ENCODE measurements at regions of chr11 and their contacts with region 1.

Region 1: DNA sequence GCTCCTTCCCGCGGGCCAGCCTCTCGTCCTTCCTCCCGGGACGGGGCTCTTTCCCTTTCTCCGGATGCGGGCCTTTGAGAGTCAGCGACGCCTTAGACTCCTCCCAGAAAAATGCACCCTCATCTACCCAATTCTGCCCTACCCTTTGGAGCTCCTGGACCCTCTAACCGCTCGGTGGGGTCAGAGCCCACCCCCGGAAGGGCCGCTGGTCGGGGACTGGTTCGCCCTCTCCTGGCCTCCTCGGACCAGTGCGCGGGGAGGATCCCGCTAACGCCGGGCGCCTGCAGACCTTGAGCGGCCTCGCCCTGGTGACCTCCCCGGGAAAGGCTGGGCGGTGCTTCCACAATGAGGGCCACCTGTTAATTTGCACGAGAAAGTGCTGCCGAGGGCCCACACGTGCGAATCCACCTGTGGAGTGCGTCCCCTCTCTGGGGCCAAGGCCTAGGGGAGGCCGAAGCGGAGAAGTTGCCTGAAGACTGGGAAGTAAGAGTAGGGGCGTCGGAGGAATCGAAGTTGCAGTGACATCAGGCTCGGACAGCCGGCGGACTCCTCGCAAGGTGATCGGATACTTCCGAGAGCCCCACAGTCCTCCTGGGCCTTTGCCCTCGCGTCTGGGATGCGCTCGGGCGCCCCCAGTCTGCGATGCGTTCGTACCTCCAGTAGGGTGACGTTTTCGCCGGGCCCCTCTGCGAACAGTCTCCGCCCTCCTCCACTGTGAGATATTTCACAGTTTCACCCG is 61.5 kb downstream of the ENDOD1 start:
- DNase-seq: peak; percentile 98 to 99
- H3K4me3 ChIP-seq: peak overlapping the region; percentile 51
- H3K4me3 Mint-ChIP-seq: peak overlapping the region; percentile 93
- H3K27ac Mint-ChIP-seq: peak overlapping the region; percentile 94
- H3K4me1 ChIP-seq: peaks cover 14% of the 10 kb centered on the region
- H3K4me1 Mint-ChIP-seq: peaks cover 20% of the 10 kb centered on the region
- H3K27me3 ChIP-seq: no peaks in the 10 kb centered on the region
- H3K27me3 Mint-ChIP-seq: no peaks in the 10 kb centered on the region
- CTCF ChIP-seq: peak; percentile 96 to 97

Region 2: DNA sequence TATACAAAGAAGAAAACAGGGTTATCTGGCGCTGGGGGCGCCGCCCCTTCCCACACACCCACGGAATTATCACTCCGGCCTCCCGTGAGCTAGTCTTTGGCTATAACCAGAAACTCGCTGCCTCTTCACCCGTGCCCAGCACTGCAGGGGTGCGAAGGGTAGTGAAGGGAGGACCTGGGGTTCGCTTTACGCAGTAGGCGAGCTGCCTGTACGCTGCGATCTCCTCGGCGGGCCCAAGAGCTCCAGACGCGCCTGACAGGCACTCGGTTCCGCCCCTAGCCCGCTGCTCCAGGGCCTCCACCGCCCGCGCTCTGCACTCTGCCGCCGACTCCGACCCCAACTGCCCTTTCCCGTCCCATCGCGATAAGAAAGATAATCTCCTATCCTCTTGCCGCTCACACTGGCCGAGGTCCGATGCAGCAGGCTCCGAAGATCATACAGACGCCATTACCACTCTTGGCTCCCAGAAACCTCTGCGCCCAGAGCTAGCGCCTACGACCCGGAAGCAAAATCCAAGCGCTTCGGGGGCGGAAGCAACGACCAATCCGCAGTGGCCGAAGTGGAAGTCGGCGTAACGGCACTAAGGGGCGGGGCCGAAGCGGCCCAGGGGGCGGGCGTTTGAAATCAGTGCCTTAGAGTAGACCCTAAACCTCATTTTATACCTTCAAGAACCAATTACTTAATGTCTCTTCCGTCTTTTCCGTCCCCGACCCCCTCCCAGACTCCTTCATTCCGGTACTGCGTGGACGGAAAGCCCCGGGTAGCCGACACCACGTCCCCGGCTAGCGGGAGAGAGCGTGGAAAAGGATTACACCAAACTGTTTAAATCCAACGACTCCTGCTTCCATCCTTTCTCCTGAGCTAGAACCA is 177.8 kb before region 1 on chr11 and contains the starts of genes CWC15 and KDM4D:
- CTCF ChIA-PET with region 1: interaction called, 4 read pairs
- POLR2A ChIA-PET with region 1: interaction called, 5 read pairs
- intact Hi-C with region 1: loop called (anchors 5 kb)
- DNase-seq: peak; percentile 97
- H3K4me3 ChIP-seq: peak within 1 kb of the TSS; percentile 56
- H3K4me3 Mint-ChIP-seq: peak within 1 kb of the TSS; percentile 89
- H3K27ac Mint-ChIP-seq: peak within 1 kb of the TSS; percentile 94
- H3K4me1 ChIP-seq: peaks cover 9% of the 10 kb centered on the region; the same call in 1 of the 2 replicates
- H3K4me1 Mint-ChIP-seq: peaks cover 25% of the 10 kb centered on the region
- H3K27me3 ChIP-seq: no peaks in the 10 kb centered on the region
- H3K27me3 Mint-ChIP-seq: no peaks in the 10 kb centered on the region
- CTCF ChIP-seq: no peak
- total RNA-seq, gene CWC15: 137 and 144 TPM in 2 replicates
- total RNA-seq, gene KDM4D: 0.95 and 1.2 TPM in 2 replicates

Region 3: DNA sequence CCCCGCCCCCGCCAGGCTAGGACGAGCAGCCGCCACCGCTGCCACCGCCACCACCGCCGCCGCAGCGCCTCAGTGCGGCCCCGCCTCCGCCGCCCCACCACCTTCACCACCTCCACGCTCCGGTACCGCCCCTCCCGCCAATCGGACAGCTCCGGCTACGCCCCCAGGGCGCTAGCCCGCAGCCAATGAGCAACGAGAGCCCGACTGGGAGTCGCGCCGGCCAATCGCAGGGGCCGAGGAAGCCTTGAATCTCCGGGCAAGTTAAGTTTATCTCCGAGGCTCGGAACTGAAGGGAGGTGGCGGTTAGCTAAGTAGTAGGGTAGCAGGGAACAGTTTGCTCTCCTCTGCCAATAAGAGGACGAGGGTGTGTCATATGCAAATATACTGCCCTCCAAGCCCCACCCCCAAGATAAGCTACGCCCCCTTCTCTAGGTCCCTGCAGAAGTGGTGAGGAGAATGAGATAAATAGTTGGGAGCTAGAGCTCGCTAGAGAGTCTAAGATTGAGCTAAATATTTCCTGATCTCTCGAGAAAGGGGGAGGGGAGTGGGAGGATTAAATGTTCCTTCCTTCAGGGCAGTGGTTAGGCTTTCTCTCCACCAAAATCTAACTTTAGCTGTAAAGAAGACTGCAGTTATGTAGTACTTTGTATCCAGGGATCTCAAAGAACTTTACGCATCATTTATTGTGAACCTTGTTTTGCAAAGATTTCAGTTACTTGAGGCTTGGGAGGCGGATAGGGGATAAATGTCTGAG is 80.2 kb after region 1 on chr11 and contains the start of gene SESN3:
- CTCF ChIA-PET with region 1: interaction called, 20 read pairs
- POLR2A ChIA-PET with region 1: interaction called, 8 read pairs
- intact Hi-C with region 1: loop called (anchors 1 kb)
- DNase-seq: peak; percentile 100
- H3K4me3 ChIP-seq: peak within 1 kb of the TSS; percentile 86
- H3K4me3 Mint-ChIP-seq: no peak within 1 kb of the TSS
- H3K27ac Mint-ChIP-seq: peak within 1 kb of the TSS; percentile 29
- H3K4me1 ChIP-seq: peaks cover 7% of the 10 kb centered on the region; the same call in 1 of the 2 replicates
- H3K4me1 Mint-ChIP-seq: peaks cover 6% of the 10 kb centered on the region
- H3K27me3 ChIP-seq: no peaks in the 10 kb centered on the region
- H3K27me3 Mint-ChIP-seq: no peaks in the 10 kb centered on the region
- CTCF ChIP-seq: no peak
- total RNA-seq, gene SESN3: 28.2 and 29.2 TPM in 2 replicates

Region 4: GRCh38 chr11:95364324-95365295 is 213.5 kb after region 1 on chr11:
- CTCF ChIA-PET with region 1: interaction called, 4 read pairs
- POLR2A ChIA-PET with region 1: no interaction called
- intact Hi-C with region 1: loop called (anchors 2 kb)
- DNase-seq: peak in 1 of 2 experiments; percentile 61
- H3K4me3 ChIP-seq: no peak overlapping the region
- H3K4me3 Mint-ChIP-seq: peak overlapping the region; percentile 50
- H3K27ac Mint-ChIP-seq: peak overlapping the region; percentile 80
- H3K4me1 ChIP-seq: peaks cover 37% of the 10 kb centered on the region
- H3K4me1 Mint-ChIP-seq: peaks cover 38% of the 10 kb centered on the region
- H3K27me3 ChIP-seq: no peaks in the 10 kb centered on the region
- H3K27me3 Mint-ChIP-seq: no peaks in the 10 kb centered on the region
- CTCF ChIP-seq: no peak

Region 5: GRCh38 chr11:95536047-95536690 is 385.1 kb after region 1 on chr11:
- CTCF ChIA-PET with region 1: interaction called, 5 read pairs
- POLR2A ChIA-PET with region 1: no interaction called
- intact Hi-C with region 1: loop called (anchors 1 kb)
- DNase-seq: peak in 1 of 2 experiments; percentile 35
- H3K4me3 ChIP-seq: no peak overlapping the region
- H3K4me3 Mint-ChIP-seq: no peak overlapping the region
- H3K27ac Mint-ChIP-seq: no peak overlapping the region
- H3K4me1 ChIP-seq: no peaks in the 10 kb centered on the region
- H3K4me1 Mint-ChIP-seq: no peaks in the 10 kb centered on the region
- H3K27me3 ChIP-seq: no peaks in the 10 kb centered on the region
- H3K27me3 Mint-ChIP-seq: peaks cover 9% of the 10 kb centered on the region
- CTCF ChIP-seq: peak in 1 of 2 experiments; percentile 41

Region 6: GRCh38 chr11:95764267-95764898 is 613.3 kb after region 1 on chr11:
- CTCF ChIA-PET with region 1: interaction called, 9 read pairs
- POLR2A ChIA-PET with region 1: interaction called, 3 read pairs
- intact Hi-C with region 1: loop called (anchors 1 kb)
- DNase-seq: peak in 1 of 2 experiments; percentile 56
- H3K4me3 ChIP-seq: no peak overlapping the region
- H3K4me3 Mint-ChIP-seq: no peak overlapping the region
- H3K27ac Mint-ChIP-seq: no peak overlapping the region
- H3K4me1 ChIP-seq: peaks cover 7% of the 10 kb centered on the region; the same call in 1 of the 2 replicates
- H3K4me1 Mint-ChIP-seq: peaks cover 6% of the 10 kb centered on the region
- H3K27me3 ChIP-seq: no peaks in the 10 kb centered on the region
- H3K27me3 Mint-ChIP-seq: peaks cover 8% of the 10 kb centered on the region
- CTCF ChIP-seq: peak; percentile 56 to 91

Region 7: GRCh38 chr11:96424693-96425092 is 1273.6 kb after region 1 on chr11:
- CTCF ChIA-PET with region 1: no interaction called
- POLR2A ChIA-PET with region 1: no interaction called
- intact Hi-C with region 1: loop called (anchors 1 kb)
- DNase-seq: no peak
- H3K4me3 ChIP-seq: no peak overlapping the region
- H3K4me3 Mint-ChIP-seq: no peak overlapping the region
- H3K27ac Mint-ChIP-seq: no peak overlapping the region
- H3K4me1 ChIP-seq: peaks cover 5% of the 10 kb centered on the region; the same call in 1 of the 2 replicates
- H3K4me1 Mint-ChIP-seq: no peaks in the 10 kb centered on the region
- H3K27me3 ChIP-seq: no peaks in the 10 kb centered on the region; the same call in 1 of the 2 replicates
- H3K27me3 Mint-ChIP-seq: peaks cover 19% of the 10 kb centered on the region
- CTCF ChIP-seq: no peak